ENCODE measurements at regions of chr12 and their contacts with region 1.

Region 1: GRCh38 chr12:751192-751998 is 984 bp upstream of the WNK1 start:
- DNase-seq: peak; percentile 96
- ATAC-seq: peak; percentile 57
- H3K4me3 Mint-ChIP-seq: no peak overlapping the region
- H3K27ac Mint-ChIP-seq: no peak overlapping the region
- H3K4me1 Mint-ChIP-seq: peaks cover 22% of the 10 kb centered on the region
- H3K27me3 Mint-ChIP-seq: no peaks in the 10 kb centered on the region
- CTCF ChIP-seq: peak; percentile 71

Region 2: DNA sequence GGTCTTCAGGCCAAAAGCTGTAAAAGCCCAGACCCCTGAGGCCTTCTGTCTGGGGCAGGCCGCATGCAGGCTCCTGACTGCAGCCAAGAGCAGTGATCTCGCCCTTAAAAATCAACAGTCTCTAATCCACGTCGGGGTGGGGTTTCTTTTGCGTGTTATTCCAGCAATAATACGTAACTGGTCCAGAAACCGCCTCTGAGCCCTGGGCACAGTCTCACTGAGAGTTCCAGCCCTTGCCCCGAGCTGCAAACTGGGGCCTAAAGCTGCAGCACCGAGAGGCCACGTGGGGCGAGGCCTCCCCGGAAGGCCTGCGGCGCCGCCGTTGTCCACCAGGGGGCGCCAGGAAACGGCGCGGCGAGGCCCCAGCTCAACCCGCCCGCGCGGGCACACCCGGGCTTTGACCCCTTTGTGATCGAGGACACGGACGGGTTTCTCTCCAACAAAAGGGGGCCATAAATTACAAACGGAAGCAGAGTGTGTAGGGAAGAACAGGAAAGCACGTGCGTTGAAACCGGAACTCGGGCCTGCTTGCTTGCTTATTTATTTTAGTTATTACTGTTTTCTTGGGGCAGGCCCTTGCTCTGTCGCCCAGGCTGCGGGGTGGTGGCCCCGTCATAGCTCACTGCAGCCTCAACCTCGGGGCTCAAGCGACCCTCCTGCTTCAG is 175.3 kb before region 1 on chr12:
- CTCF ChIA-PET with region 1: interaction called, 61 read pairs
- POLR2A ChIA-PET with region 1: interaction called, 18 read pairs
- intact Hi-C with region 1: loop called (anchors 5 kb)
- DNase-seq: peak; percentile 86
- ATAC-seq: peak; percentile 90
- H3K4me3 Mint-ChIP-seq: no peak overlapping the region
- H3K27ac Mint-ChIP-seq: peak overlapping the region; percentile 79
- H3K4me1 Mint-ChIP-seq: peaks cover 38% of the 10 kb centered on the region
- H3K27me3 Mint-ChIP-seq: no peaks in the 10 kb centered on the region
- CTCF ChIP-seq: peak; percentile 98

Region 3: DNA sequence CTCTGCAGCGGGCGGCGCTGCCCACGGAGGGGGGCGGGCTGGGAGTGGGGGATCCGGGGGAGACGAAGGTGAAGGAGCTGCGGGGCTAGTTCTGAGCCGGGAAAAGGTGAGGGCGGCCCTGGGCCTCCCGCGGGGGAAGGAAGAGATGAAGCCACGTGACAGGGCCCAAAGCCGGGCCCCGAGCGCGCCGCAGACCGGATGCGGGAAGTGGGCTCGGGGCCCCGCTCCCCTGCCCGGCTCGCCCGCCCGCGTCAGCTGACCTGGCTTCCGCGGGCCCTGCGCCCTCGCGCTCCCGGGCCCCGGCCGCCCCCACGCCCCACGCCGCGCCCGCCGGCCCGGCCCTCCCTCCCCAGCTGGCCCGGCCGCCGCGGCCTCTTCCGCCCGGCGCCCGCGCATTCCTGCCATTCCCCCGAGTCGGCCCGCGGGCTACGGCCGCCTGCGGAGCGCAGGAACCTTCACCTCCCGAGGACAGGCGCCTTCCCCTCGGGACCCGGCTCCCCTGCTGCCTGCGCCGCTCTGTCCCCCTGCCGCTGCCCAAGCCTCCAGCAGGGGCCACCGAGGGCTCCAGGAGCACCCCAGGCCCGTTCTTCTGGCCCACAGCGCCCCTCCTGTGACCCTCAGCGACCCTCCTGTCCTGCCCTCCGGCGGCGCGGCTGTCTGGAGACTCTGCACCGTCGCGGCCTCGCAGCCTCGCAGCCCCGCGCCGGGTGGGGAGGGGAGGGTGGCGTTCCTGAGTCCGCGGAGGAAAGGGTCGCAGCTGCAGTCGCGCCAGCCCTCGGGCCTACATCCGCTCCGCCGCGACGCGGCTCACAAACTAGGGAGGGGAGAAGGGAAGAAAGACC is 108.5 kb before region 1 on chr12:
- CTCF ChIA-PET with region 1: interaction called, 18 read pairs
- POLR2A ChIA-PET with region 1: interaction called, 7 read pairs
- intact Hi-C with region 1: no loop called
- DNase-seq: peak; percentile 82
- ATAC-seq: peak; percentile 68
- H3K4me3 Mint-ChIP-seq: peak overlapping the region; percentile 84
- H3K27ac Mint-ChIP-seq: peak overlapping the region; percentile 91
- H3K4me1 Mint-ChIP-seq: peaks cover 57% of the 10 kb centered on the region
- H3K27me3 Mint-ChIP-seq: no peaks in the 10 kb centered on the region
- CTCF ChIP-seq: peak; percentile 48

Region 4: DNA sequence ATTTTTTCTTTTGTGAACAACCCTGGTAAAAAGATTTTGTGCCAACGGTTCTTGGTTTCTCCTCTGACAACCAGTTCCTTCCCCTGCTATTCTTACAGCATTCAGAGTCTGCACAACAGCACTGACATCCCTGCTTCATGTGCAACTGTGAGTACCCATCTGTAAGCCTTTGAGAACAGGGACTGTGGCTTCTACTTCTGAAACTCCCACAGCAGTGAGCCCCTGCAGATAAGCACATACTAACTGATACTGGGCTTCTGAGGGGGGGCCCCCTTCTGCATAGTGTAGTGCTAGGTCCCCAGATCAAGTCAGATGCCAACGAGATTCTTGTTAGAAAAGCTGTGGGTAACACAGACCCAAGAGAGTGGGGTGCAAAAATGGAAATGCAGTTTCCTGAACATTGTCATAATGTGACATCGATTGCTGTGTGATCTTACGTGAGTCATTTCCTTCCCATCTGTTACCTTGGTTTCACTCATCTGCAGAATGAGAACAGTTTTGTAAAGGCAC is 77.1 kb before region 1 on chr12:
- CTCF ChIA-PET with region 1: interaction called, 88 read pairs
- POLR2A ChIA-PET with region 1: interaction called, 54 read pairs
- intact Hi-C with region 1: loop called (anchors 2 kb)
- DNase-seq: peak; percentile 96
- ATAC-seq: peak; percentile 92
- H3K4me3 Mint-ChIP-seq: peak overlapping the region; percentile 72
- H3K27ac Mint-ChIP-seq: peak overlapping the region; percentile 97
- H3K4me1 Mint-ChIP-seq: peaks cover 72% of the 10 kb centered on the region
- H3K27me3 Mint-ChIP-seq: no peaks in the 10 kb centered on the region
- CTCF ChIP-seq: no peak

Region 5: DNA sequence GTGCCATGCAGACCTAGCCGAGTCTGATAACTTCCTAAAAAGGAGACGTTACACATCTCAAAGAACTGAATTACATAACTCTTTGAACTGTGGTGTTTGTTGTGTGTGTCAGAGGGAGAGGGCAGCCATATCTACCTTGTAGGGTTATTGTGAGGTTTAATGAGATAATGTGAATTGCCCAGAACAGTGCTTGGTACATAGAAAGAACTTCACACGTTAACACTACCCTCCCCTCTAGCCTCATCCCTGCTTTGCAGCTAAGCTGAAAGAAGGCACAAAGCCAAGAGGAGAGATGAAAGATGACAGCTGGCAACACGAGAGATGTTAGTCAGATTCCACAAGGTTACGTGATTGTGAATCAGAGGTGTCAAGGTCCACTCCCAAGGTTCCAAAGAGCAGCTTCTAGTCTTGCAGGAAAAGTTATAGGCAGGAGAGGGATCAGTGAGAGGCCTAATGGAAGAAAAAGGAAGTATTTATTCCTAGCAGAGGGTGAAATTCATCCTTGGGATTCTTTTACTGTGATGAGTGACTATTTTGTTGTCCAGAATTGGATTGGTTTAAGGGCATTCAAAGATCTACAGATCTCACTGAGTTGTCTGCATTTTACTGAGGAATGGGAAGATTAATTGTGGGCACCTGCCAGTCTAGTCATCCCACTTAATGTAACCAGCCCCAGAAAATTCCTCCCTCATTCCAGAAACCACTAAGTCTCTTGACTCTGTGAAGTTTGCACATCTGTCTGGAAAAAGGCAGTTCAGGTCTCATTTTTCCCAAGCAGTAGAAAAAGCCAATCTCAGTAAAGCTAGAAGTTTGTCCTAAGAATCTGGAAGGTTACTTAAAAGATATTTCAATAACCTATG is 24.9 kb before region 1 on chr12:
- CTCF ChIA-PET with region 1: interaction called, 20 read pairs
- POLR2A ChIA-PET with region 1: interaction called, 16 read pairs
- intact Hi-C with region 1: no loop called
- DNase-seq: no peak
- ATAC-seq: peak; percentile 29
- H3K4me3 Mint-ChIP-seq: no peak overlapping the region
- H3K27ac Mint-ChIP-seq: peak overlapping the region; percentile 78
- H3K4me1 Mint-ChIP-seq: peaks cover 72% of the 10 kb centered on the region
- H3K27me3 Mint-ChIP-seq: no peaks in the 10 kb centered on the region
- CTCF ChIP-seq: no peak

Region 6: DNA sequence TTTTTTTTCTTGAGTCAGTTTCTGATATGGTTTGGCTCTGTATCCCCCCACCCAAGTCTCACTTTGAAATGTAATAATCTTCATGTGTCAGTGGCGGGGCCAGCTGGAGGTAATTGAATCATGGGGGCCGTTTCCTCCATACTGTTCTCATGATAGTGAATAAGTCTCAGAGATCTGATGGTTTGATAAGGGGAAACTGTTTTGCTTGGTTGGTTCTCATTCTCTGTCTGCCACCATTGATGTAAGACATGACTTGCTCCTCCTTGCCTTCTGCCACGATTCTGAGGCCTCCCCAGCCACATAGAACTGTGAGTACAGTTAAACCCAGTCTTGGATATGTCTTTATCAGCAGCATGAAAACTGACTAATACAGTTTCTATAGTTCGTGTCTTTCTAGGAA is 43.9 kb after region 1 on chr12:
- CTCF ChIA-PET with region 1: interaction called, 7 read pairs
- POLR2A ChIA-PET with region 1: interaction called, 18 read pairs
- intact Hi-C with region 1: loop called (anchors 5 kb)
- DNase-seq: peak; percentile 92
- ATAC-seq: peak; percentile 87
- H3K4me3 Mint-ChIP-seq: peak overlapping the region; percentile 28
- H3K27ac Mint-ChIP-seq: peak overlapping the region; percentile 92
- H3K4me1 Mint-ChIP-seq: peaks cover 84% of the 10 kb centered on the region
- H3K27me3 Mint-ChIP-seq: no peaks in the 10 kb centered on the region
- CTCF ChIP-seq: no peak

Region 7: DNA sequence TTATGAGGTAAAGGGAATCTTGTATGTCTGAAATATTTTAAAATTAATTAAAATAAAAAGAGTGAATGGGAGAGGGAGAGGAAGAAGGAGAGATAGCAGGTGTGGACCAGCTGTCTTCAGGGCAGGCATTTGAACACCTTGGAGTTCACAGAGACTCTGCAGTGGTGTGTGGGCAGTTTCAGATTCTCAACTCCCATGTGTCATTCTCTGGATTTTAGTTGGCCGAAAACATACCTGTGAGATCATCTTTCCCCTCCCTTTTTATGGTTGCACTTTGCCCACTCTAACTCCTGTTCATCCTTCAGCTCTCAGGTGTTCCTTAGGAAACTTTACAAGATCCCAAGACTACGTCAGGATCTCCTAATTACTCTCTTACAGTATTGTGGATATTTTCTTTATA is 347.8 kb after region 1 on chr12:
- CTCF ChIA-PET with region 1: no interaction called
- POLR2A ChIA-PET with region 1: no interaction called
- intact Hi-C with region 1: no loop called
- DNase-seq: peak; percentile 58
- ATAC-seq: peak; percentile 92
- H3K4me3 Mint-ChIP-seq: no peak overlapping the region
- H3K27ac Mint-ChIP-seq: no peak overlapping the region
- H3K4me1 Mint-ChIP-seq: peaks cover 47% of the 10 kb centered on the region
- H3K27me3 Mint-ChIP-seq: no peaks in the 10 kb centered on the region
- CTCF ChIP-seq: no peak